A673 (cell line): ENCODE measurements at regions of chrX and their contacts with region 1.

Region 1: GRCh38 chrX:118603981-118604380 is 108.4 kb downstream of the DOCK11 start:
- DNase-seq: peak; percentile 79
- H3K4me3 ChIP-seq: no peak overlapping the region
- H3K27ac ChIP-seq: no peak overlapping the region
- H3K4me1 ChIP-seq: no peaks in the 10 kb centered on the region
- H3K27me3 ChIP-seq: no peaks in the 10 kb centered on the region
- CTCF ChIP-seq: peak; percentile 83

Region 2: GRCh38 chrX:118459494-118459893 is 144.5 kb before region 1 on chrX:
- CTCF ChIA-PET with region 1: interaction called, 13 read pairs
- POLR2A ChIA-PET with region 1: no interaction called
- intact Hi-C with region 1: loop called (anchors 1 kb)
- DNase-seq: peak; percentile 30
- H3K4me3 ChIP-seq: no peak overlapping the region
- H3K27ac ChIP-seq: no peak overlapping the region
- H3K4me1 ChIP-seq: no peaks in the 10 kb centered on the region
- H3K27me3 ChIP-seq: no peaks in the 10 kb centered on the region
- CTCF ChIP-seq: peak; percentile 49

Region 3: DNA sequence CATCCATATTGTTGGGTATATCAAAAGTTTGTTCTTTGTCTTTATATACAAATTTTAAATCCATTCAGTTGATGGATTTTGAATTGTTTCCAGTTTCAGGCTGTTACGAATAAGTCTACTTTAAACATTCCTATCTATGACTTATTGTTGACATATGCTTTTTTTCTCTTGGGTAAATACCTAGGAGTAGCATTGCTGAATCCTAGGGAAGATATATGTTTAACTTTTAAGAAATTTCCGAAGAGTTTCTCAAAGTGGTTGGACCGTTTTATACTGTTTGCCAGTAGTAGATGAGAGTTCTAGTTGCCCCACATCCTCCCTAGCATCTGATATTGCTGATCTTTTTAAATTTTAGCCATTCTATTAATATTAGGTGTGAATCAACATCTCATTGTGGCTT is 62.6 kb after region 1 on chrX:
- CTCF ChIA-PET with region 1: no interaction called
- POLR2A ChIA-PET with region 1: no interaction called
- intact Hi-C with region 1: no loop called
- DNase-seq: no peak
- H3K4me3 ChIP-seq: no peak overlapping the region
- H3K27ac ChIP-seq: no peak overlapping the region
- H3K4me1 ChIP-seq: no peaks in the 10 kb centered on the region
- H3K27me3 ChIP-seq: no peaks in the 10 kb centered on the region
- CTCF ChIP-seq: no peak

Region 4: GRCh38 chrX:118807151-118808017 is 203.4 kb after region 1 on chrX:
- CTCF ChIA-PET with region 1: no interaction called
- POLR2A ChIA-PET with region 1: no interaction called
- intact Hi-C with region 1: loop called (anchors 1 kb)
- DNase-seq: peak; percentile 65
- H3K4me3 ChIP-seq: no peak overlapping the region
- H3K27ac ChIP-seq: no peak overlapping the region
- H3K4me1 ChIP-seq: no peaks in the 10 kb centered on the region
- H3K27me3 ChIP-seq: no peaks in the 10 kb centered on the region
- CTCF ChIP-seq: peak; percentile 70

Region 5: GRCh38 chrX:119067023-119067739 is 463.2 kb after region 1 on chrX:
- CTCF ChIA-PET with region 1: no interaction called
- POLR2A ChIA-PET with region 1: no interaction called
- intact Hi-C with region 1: loop called (anchors 5 kb)
- DNase-seq: peak; percentile 63
- H3K4me3 ChIP-seq: no peak overlapping the region
- H3K27ac ChIP-seq: no peak overlapping the region
- H3K4me1 ChIP-seq: peaks cover 12% of the 10 kb centered on the region
- H3K27me3 ChIP-seq: peaks cover 4% of the 10 kb centered on the region
- CTCF ChIP-seq: peak; percentile 75